CD4-positive, alpha-beta T cell (primary cell): ENCODE measurements at regions of chr7 and their contacts with region 1.

Region 1: DNA sequence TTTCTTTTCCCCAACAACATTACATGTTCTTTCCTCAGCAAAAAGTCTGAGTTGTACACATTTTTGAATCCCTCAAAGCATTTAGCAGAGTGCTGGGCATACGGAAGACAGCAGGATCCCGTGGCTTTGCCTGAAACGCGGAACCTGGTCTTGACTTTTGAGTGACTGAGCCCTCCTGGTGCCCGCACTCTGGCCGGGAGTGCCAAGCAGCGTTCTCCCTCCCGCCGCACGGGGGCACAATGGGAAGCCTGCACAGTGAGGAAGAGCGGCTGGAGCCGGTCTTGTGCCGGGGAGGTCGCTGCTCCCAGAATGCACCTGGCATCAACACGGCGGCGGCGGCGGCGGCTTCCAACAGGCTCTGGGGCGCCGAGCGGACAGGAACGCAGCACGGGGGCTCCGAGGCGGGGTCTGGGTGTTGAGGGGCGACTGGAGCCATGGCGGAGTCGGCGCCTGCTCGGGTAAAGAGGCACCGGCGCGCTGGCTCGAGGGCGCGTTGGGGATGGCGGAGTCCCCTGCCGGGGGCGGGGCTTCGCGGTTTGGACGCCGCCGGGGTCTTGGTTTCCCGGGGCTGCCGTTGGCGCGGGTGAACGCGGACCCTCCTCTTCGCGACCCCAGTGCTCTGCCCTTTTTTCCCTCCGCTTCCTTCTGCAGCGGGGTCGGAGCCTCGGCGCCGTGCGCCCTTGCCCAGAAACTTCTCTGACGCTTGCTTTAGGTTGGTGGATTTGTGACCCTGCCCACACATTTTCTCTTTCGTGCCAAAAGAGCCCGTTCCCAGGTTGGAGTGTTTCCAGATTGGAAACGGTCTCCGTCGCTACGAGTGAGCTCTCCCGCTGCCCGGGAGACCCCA is at the start of gene ZNF212:
- DNase-seq: peak; percentile 78 to 93 (median 86)
- ATAC-seq: peak; percentile 100
- H3K4me3 ChIP-seq: peak within 1 kb of the TSS; percentile 84
- H3K4me3 Mint-ChIP-seq: peak within 1 kb of the TSS; percentile 93
- H3K27ac ChIP-seq: peak within 1 kb of the TSS in 1 of 2 donors; percentile 72
- H3K27ac Mint-ChIP-seq: peak within 1 kb of the TSS; percentile 81
- H3K4me1 ChIP-seq: peaks cover 30% of the 10 kb centered on the region
- H3K4me1 Mint-ChIP-seq: peaks cover 27% of the 10 kb centered on the region
- H3K27me3 ChIP-seq: no peaks in the 10 kb centered on the region
- H3K27me3 Mint-ChIP-seq: peaks cover 10% of the 10 kb centered on the region
- CTCF ChIP-seq: peak; percentile 86
- total RNA-seq, gene ZNF212: 12.1 to 13.2 TPM

Region 2: DNA sequence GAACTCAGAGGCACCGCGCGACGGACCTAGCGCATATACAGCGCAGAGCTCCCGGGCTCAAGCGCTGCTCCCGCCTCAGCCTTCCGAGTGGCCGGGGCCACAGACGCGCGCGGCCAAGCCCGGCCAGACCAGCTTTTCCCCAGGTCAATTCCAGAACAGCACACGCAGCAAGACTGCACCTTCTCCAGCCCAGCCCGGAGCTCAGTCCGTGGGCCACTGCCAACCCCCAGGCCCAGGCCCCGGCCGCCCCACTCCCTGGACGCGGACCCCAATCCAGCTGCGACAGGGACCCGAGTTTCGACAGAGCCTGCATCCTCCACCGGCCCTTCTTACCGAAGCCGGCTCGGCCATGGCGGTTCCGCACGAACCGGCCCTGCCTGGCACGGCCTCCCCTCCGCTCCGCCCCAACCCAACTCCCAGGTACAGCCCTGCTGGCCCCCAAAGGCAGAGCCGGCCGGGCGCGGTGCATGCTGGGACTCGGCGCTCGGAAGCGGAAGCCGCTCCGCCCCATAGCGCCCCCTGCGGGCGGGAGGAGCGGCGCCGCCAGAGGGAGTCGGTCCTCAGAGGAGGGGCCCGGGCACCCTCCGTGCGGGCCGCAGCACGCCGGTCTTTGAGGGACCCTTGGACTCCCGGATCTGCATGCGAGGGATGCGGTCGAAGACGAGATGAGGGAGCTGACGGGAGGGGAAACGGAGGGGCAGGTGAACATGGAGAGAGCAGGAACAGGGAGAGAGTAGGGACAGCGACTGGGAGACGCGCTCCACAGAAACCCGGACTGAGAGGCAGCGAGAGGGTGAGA is 113.5 kb before region 1 on chr7 and contains the start of gene ZNF425:
- CTCF ChIA-PET with region 1: no interaction called
- POLR2A ChIA-PET with region 1: no interaction called
- intact Hi-C with region 1: loop called in 1 of 2 experiments (anchors 1 kb)
- DNase-seq: peak; percentile 87 to 96 (median 93)
- ATAC-seq: peak; percentile 83
- H3K4me3 ChIP-seq: peak within 1 kb of the TSS; percentile 100
- H3K4me3 Mint-ChIP-seq: peak within 1 kb of the TSS; percentile 100
- H3K27ac ChIP-seq: peak within 1 kb of the TSS; percentile 79 to 80
- H3K27ac Mint-ChIP-seq: peak within 1 kb of the TSS; percentile 96
- H3K4me1 ChIP-seq: peaks cover 12% of the 10 kb centered on the region
- H3K4me1 Mint-ChIP-seq: peaks cover 24% of the 10 kb centered on the region
- H3K27me3 ChIP-seq: no peaks in the 10 kb centered on the region
- H3K27me3 Mint-ChIP-seq: no peaks in the 10 kb centered on the region
- CTCF ChIP-seq: peak; percentile 94
- total RNA-seq, gene ZNF425: 0.22 to 0.39 TPM

Region 3: DNA sequence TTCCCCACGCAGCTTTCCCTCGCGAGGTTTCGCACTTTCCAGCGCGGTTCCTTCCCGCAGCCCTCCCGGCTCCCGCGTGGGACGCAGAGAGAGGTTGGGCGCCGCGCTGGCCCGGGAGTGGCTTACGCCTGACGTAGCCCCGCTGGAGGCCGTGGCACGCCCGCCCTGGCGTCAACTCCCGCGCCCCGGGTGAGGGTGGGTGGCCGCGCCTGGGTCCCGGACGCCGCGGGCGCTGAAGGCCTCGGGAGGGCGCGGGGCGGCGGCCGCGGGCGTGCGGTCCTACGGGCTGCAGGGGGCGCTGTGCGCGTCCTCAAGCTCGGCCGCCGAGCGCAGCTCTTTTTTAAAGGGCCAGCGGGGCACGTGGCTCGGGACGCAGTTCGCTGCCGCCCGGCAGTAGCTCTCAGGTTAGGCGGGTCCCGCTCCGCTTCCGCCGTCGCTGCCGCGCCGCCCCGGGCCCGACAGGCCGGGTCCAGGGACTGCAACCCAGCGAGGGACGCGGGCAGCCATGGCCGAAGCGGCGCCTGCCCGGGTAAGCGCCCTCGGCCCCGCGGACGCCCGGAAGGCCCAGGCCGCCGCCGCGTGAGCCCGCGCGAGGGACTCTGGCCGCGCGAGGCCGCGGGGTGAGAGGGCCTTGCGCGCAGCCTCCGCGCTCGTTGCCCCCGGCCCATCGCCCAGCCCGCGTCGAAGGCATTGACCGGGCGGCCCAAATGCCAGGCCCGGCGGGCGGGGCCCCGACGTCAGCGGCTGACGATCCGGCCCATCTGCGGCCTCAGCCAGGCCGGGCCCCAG is 22.5 kb after region 1 on chr7 and contains the start of gene ZNF783:
- CTCF ChIA-PET with region 1: interaction called, 7 read pairs
- POLR2A ChIA-PET with region 1: interaction called, 12 read pairs
- intact Hi-C with region 1: loop called in 1 of 2 experiments (anchors 1 kb)
- DNase-seq: peak; percentile 75 to 97 (median 83)
- ATAC-seq: peak; percentile 91
- H3K4me3 ChIP-seq: peak within 1 kb of the TSS; percentile 56
- H3K4me3 Mint-ChIP-seq: peak within 1 kb of the TSS; percentile 89
- H3K27ac ChIP-seq: peak within 1 kb of the TSS; percentile 41 to 42
- H3K27ac Mint-ChIP-seq: peak within 1 kb of the TSS; percentile 80
- H3K4me1 ChIP-seq: peaks cover 28% of the 10 kb centered on the region
- H3K4me1 Mint-ChIP-seq: peaks cover 38% of the 10 kb centered on the region
- H3K27me3 ChIP-seq: no peaks in the 10 kb centered on the region
- H3K27me3 Mint-ChIP-seq: no peaks in the 10 kb centered on the region
- CTCF ChIP-seq: peak; percentile 57
- total RNA-seq, gene ZNF783: 27.6 to 29.0 TPM

Region 4: GRCh38 chr7:149422129-149422913 is 182.8 kb after region 1 on chr7:
- CTCF ChIA-PET with region 1: no interaction called
- POLR2A ChIA-PET with region 1: interaction called, 3 read pairs
- intact Hi-C with region 1: loop called in 1 of 2 experiments (anchors 2 kb)
- DNase-seq: peak; percentile 33 to 93 (median 69)
- ATAC-seq: peak; percentile 92
- H3K4me3 ChIP-seq: peak overlapping the region; percentile 75
- H3K4me3 Mint-ChIP-seq: peak overlapping the region; percentile 70
- H3K27ac ChIP-seq: peak overlapping the region; percentile 16 to 76
- H3K27ac Mint-ChIP-seq: peak overlapping the region; percentile 68
- H3K4me1 ChIP-seq: peaks cover 17% of the 10 kb centered on the region
- H3K4me1 Mint-ChIP-seq: no peaks in the 10 kb centered on the region
- H3K27me3 ChIP-seq: no peaks in the 10 kb centered on the region
- H3K27me3 Mint-ChIP-seq: no peaks in the 10 kb centered on the region
- CTCF ChIP-seq: peak; percentile 29